Naive thymus-derived CD4-positive, alpha-beta T cell (primary cell): ENCODE measurements at regions of chr11 and their contacts with region 1.

Region 1: DNA sequence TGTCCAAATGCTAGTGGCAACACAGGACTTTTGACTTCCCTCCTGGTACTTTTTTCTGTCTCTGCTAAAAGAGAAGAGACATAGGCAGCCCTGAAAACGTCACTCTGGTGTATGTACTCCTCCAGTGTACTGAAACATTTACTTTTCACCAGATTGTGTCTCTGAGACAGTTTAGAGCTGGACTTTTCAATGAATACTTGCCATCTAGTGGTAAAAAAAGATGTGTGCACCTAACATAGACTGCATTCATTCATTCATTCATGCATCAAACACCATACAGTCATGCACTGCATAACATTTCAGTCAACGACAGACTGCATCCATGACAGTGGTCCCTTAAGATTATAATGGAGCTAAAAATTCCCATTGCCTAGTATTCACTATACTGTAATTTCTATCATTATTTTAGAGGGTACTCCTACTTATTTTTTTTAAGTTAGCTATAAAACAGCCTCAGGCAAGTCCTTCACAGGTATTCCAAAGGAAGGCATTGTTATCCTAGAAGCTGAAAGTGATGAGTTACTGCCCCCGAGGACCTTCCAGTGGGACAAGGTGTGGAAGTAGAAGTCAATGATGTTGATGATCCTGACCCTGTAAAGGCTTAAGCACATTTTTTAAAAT is 186.2 kb downstream of the SPON1 start:
- DNase-seq: peak in 7 of 9 donors; percentile 26 to 66 (median 46)
- ATAC-seq: peak; percentile 75
- H3K4me3 ChIP-seq: no peak overlapping the region
- H3K4me3 Mint-ChIP-seq: no peak overlapping the region
- H3K27ac ChIP-seq: no peak overlapping the region
- H3K27ac Mint-ChIP-seq: peak overlapping the region in 1 of 9 donors; percentile 74
- H3K4me1 ChIP-seq: no peaks in the 10 kb centered on the region
- H3K4me1 Mint-ChIP-seq: peaks cover 0 to 5% (median 4%) of the 10 kb centered on the region in 7 donors
- H3K27me3 ChIP-seq: no peaks in the 10 kb centered on the region
- H3K27me3 Mint-ChIP-seq: peaks cover 0 to 20% (median 0%) of the 10 kb centered on the region in 5 donors

Region 2: GRCh38 chr11:13861411-13861810 is 287.4 kb before region 1 on chr11:
- CTCF ChIA-PET with region 1: interaction called, 35 read pairs
- POLR2A ChIA-PET with region 1: no interaction called
- intact Hi-C with region 1: loop called in 1 of 2 experiments (anchors 1 kb)
- DNase-seq: peak in 4 of 9 donors; percentile 11 to 19 (median 14)
- ATAC-seq: no peak
- H3K4me3 ChIP-seq: no peak overlapping the region
- H3K4me3 Mint-ChIP-seq: peak overlapping the region in 7 of 10 donors; percentile 6 to 66 (median 55)
- H3K27ac ChIP-seq: no peak overlapping the region
- H3K27ac Mint-ChIP-seq: peak overlapping the region in 8 of 9 donors; percentile 33 to 98 (median 71)
- H3K4me1 ChIP-seq: peaks cover 6 to 19% of the 10 kb centered on the region in 2 donors
- H3K4me1 Mint-ChIP-seq: peaks cover 20 to 33% (median 25%) of the 10 kb centered on the region in 7 donors
- H3K27me3 ChIP-seq: no peaks in the 10 kb centered on the region
- H3K27me3 Mint-ChIP-seq: no peaks in the 10 kb centered on the region

Region 3: DNA sequence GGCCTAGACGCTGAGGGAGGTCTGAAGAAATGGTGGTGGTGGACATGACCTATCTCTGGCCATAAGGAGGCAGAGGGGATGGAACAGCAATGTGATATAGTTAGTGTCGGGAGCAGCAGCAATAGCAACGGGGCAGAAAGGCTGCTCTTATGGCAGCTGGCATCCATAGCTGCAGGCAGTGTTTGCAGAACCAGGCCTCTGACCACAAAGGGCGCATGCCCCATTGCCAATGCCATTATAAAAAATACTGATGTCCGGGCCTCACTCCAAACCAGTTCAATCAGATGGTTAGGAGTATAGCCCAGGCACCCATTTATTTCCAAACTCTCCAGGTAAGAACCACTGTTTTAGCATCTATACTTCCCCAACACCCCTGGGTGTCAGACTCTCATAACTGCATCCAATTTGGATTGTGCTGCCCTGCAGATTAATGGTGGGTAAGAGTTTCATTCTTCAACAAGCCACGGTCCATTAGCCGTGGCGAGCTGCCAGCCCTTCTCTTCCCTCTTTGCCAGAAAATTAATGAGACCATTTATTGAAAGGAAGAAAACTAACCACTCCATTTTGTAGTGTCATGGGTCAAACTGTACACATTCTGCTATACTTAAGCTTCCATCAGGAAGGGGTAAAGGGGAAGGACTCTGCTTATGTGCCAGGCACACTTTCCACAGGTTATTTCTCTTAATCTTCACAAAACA is 259.1 kb before region 1 on chr11:
- CTCF ChIA-PET with region 1: no interaction called
- POLR2A ChIA-PET with region 1: no interaction called
- intact Hi-C with region 1: no loop called
- DNase-seq: no peak
- ATAC-seq: no peak
- H3K4me3 ChIP-seq: no peak overlapping the region
- H3K4me3 Mint-ChIP-seq: no peak overlapping the region
- H3K27ac ChIP-seq: no peak overlapping the region
- H3K27ac Mint-ChIP-seq: no peak overlapping the region
- H3K4me1 ChIP-seq: no peaks in the 10 kb centered on the region
- H3K4me1 Mint-ChIP-seq: peaks cover 0 to 11% (median 7%) of the 10 kb centered on the region in 7 donors
- H3K27me3 ChIP-seq: no peaks in the 10 kb centered on the region
- H3K27me3 Mint-ChIP-seq: peaks cover 0 to 30% (median 0%) of the 10 kb centered on the region in 5 donors

Region 4: DNA sequence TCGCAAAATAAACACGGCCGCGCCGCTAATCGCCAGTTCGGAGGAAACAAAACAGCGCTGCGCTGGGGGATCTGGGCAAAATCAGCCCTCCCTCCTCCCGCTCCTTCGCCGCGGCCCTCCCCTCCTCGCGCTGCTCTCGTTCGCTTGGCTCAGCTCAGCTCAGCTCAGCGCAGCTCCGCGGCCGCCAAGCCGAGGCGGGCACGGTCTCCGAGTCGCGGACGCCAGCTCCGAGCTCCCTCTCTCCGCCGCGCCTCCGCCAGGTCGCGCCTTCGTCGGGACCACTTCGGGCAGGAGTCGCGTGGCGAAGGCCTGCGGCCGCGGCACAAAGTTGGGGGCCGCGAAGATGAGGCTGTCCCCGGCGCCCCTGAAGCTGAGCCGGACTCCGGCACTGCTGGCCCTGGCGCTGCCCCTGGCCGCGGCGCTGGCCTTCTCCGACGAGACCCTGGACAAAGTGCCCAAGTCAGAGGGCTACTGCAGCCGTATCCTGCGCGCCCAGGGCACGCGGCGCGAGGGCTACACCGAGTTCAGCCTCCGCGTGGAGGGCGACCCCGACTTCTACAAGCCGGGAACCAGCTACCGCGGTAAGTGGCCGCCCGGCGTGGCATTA is 186.1 kb before region 1 on chr11 and contains the start of gene SPON1:
- CTCF ChIA-PET with region 1: interaction called, 67 read pairs
- POLR2A ChIA-PET with region 1: interaction called, 3 read pairs
- intact Hi-C with region 1: no loop called
- DNase-seq: peak in 7 of 9 donors; percentile 34 to 57 (median 42)
- ATAC-seq: peak; percentile 81
- H3K4me3 ChIP-seq: peak within 1 kb of the TSS; percentile 34
- H3K4me3 Mint-ChIP-seq: peak within 1 kb of the TSS; percentile 68 to 86 (median 77)
- H3K27ac ChIP-seq: no peak within 1 kb of the TSS
- H3K27ac Mint-ChIP-seq: peak within 1 kb of the TSS in 1 of 9 donors; percentile 55
- H3K4me1 ChIP-seq: peaks cover 10 to 16% of the 10 kb centered on the region in 2 donors
- H3K4me1 Mint-ChIP-seq: peaks cover 4 to 18% (median 13%) of the 10 kb centered on the region in 7 donors
- H3K27me3 ChIP-seq: peaks cover 6 to 21% of the 10 kb centered on the region in 2 donors
- H3K27me3 Mint-ChIP-seq: peaks cover 55 to 88% (median 62%) of the 10 kb centered on the region in 5 donors
- total RNA-seq, gene SPON1: 1.6 to 20.8 (median 3.9) TPM

Region 5: DNA sequence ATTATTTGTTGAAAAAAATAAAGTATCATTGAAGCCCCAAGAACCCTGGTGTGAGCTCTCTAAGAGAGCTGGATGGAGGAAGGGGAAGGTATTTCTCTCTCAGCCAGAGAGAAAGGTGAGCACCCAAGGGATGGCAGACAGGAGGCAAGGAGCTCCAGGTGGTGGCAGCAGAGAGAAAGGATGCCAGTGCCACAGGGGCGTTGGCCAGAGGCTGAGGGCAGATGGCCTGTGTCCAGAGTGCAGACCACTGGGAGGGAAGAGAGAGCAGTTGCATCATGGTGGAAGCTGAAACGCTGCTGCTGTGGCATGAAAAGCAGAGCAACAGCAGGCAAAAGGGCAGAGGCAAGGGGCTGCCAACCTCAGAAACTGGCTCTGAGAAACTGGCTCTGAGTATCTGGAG is 177.8 kb before region 1 on chr11:
- CTCF ChIA-PET with region 1: interaction called, 12 read pairs
- POLR2A ChIA-PET with region 1: no interaction called
- intact Hi-C with region 1: loop called in 1 of 2 experiments (anchors 1 kb)
- DNase-seq: no peak
- ATAC-seq: no peak
- H3K4me3 ChIP-seq: no peak overlapping the region
- H3K4me3 Mint-ChIP-seq: no peak overlapping the region
- H3K27ac ChIP-seq: no peak overlapping the region
- H3K27ac Mint-ChIP-seq: peak overlapping the region in 4 of 9 donors; percentile 7 to 63 (median 11)
- H3K4me1 ChIP-seq: no peaks in the 10 kb centered on the region
- H3K4me1 Mint-ChIP-seq: peaks cover 5 to 14% (median 9%) of the 10 kb centered on the region in 7 donors
- H3K27me3 ChIP-seq: no peaks in the 10 kb centered on the region
- H3K27me3 Mint-ChIP-seq: peaks cover 6 to 33% (median 11%) of the 10 kb centered on the region in 5 donors

Region 6: GRCh38 chr11:14137284-14137683 is 11.5 kb before region 1 on chr11:
- CTCF ChIA-PET with region 1: no interaction called
- POLR2A ChIA-PET with region 1: no interaction called
- intact Hi-C with region 1: no loop called
- DNase-seq: no peak
- ATAC-seq: no peak
- H3K4me3 ChIP-seq: no peak overlapping the region
- H3K4me3 Mint-ChIP-seq: no peak overlapping the region
- H3K27ac ChIP-seq: no peak overlapping the region
- H3K27ac Mint-ChIP-seq: no peak overlapping the region
- H3K4me1 ChIP-seq: no peaks in the 10 kb centered on the region
- H3K4me1 Mint-ChIP-seq: no peaks in the 10 kb centered on the region
- H3K27me3 ChIP-seq: no peaks in the 10 kb centered on the region
- H3K27me3 Mint-ChIP-seq: peaks cover 0 to 4% (median 0%) of the 10 kb centered on the region in 5 donors